Sigmoid colon (tissue), 7 donors: ENCODE measurements at regions of chr14 and their contacts with region 1.

Region 1: DNA sequence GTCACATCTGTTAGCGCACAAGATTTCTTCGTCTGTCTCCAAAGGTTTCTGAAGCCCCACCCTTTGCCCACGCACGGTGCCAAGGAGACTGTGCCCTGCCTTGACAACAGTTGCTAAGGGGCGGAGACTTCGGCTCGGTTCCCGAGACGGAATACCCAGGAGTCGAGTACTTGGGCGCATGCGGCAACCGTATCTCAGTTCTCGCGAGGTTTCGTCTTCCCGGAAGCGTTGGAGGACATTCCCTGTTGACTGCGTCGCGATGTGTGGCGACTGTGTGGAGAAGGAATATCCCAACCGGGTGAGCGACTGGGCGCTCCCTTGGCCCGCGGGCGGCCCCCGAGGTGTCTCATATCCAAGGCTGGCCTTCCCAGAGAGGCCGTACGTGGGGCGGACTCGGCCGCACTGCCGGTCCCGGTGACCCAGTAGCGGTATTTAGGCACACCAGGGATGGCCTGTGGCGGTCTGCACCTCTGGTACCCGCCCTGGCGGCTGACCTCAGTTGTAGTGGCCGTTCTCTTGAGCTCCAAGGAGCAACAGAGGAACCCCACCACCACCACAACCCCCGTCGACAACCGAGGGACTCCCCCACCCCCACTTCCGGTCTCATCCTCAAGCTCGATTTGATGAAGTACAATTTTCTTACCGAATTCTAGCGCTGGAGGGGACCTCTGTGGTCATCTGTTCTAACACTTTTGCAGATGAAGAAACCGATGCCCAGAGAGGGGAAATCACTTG is at the start of gene CHURC1:
- DNase-seq: peak; percentile 99
- H3K4me3 ChIP-seq: peak within 1 kb of the TSS; percentile 65 to 94 (median 92)
- H3K27ac ChIP-seq: peak within 1 kb of the TSS; percentile 86 to 98 (median 94)
- H3K4me1 ChIP-seq: peaks cover 0 to 38% (median 30%) of the 10 kb centered on the region in 4 donors
- H3K27me3 ChIP-seq: no peaks in the 10 kb centered on the region
- CTCF ChIP-seq: no peak
- EP300 ChIP-seq: no peak
- POLR2A ChIP-seq: peak; percentile 71 to 84
- total RNA-seq, gene CHURC1: 110 to 161 (median 142) TPM

Region 2: GRCh38 chr14:64178814-64179213 is 735.6 kb before region 1 on chr14:
- intact Hi-C with region 1: no loop called
- DNase-seq: no peak
- H3K4me3 ChIP-seq: no peak overlapping the region
- H3K27ac ChIP-seq: no peak overlapping the region
- H3K4me1 ChIP-seq: no peaks in the 10 kb centered on the region
- H3K27me3 ChIP-seq: no peaks in the 10 kb centered on the region
- CTCF ChIP-seq: no peak
- EP300 ChIP-seq: no peak
- POLR2A ChIP-seq: no peak

Region 3: DNA sequence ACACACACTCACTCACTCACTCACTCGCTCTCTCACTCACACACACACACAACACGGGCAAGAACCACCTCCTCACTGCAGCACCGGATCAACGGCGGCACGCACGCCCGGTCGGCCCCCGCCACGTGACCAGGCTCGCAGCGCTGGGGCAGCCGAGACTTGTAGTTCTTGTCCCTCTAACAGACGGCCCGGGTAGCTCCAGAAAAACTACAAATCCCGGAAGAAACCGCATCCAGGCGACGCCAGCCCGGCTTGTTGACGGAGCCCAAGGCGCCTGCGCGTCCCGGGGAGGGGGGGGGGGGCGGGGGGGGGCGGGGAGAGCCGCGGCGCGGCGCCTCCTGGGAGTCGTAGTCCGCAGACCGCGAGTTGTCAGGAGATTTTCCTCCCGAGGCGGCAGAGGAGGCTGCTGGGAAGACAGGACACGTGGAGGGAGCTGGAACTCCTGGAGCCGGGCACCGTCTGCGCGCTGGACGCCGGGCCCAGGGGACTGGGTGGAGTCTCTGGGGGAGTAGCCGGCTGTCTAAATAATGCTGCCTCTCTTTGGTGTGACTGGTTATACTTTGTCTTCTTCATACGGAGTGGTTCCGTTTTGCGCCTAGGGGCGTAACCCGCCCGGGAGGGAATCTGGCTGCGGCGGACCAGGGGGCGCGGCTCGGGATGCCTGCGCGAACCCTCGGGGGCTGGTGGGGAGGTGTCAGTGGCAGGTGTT is 188.2 kb after region 1 on chr14 and contains the start of gene MAX:
- intact Hi-C with region 1: loop called (anchors 10 kb)
- DNase-seq: peak; percentile 99
- H3K4me3 ChIP-seq: peak within 1 kb of the TSS; percentile 68 to 95 (median 94)
- H3K27ac ChIP-seq: peak within 1 kb of the TSS; percentile 86 to 96 (median 90)
- H3K4me1 ChIP-seq: peaks cover 0 to 48% (median 39%) of the 10 kb centered on the region in 4 donors
- H3K27me3 ChIP-seq: no peaks in the 10 kb centered on the region
- CTCF ChIP-seq: no peak
- EP300 ChIP-seq: no peak
- POLR2A ChIP-seq: peak; percentile 82 to 87
- total RNA-seq, gene MAX: 61.6 to 71.7 (median 65.0) TPM

Region 4: GRCh38 chr14:65888677-65889076 is 974.3 kb after region 1 on chr14:
- intact Hi-C with region 1: no loop called
- DNase-seq: no peak
- H3K4me3 ChIP-seq: no peak overlapping the region
- H3K27ac ChIP-seq: no peak overlapping the region
- H3K4me1 ChIP-seq: no peaks in the 10 kb centered on the region
- H3K27me3 ChIP-seq: no peaks in the 10 kb centered on the region
- CTCF ChIP-seq: no peak
- EP300 ChIP-seq: no peak
- POLR2A ChIP-seq: no peak